WTC11 (cell line): ENCODE measurements at regions of chr14 and their contacts with region 1.

Region 1: DNA sequence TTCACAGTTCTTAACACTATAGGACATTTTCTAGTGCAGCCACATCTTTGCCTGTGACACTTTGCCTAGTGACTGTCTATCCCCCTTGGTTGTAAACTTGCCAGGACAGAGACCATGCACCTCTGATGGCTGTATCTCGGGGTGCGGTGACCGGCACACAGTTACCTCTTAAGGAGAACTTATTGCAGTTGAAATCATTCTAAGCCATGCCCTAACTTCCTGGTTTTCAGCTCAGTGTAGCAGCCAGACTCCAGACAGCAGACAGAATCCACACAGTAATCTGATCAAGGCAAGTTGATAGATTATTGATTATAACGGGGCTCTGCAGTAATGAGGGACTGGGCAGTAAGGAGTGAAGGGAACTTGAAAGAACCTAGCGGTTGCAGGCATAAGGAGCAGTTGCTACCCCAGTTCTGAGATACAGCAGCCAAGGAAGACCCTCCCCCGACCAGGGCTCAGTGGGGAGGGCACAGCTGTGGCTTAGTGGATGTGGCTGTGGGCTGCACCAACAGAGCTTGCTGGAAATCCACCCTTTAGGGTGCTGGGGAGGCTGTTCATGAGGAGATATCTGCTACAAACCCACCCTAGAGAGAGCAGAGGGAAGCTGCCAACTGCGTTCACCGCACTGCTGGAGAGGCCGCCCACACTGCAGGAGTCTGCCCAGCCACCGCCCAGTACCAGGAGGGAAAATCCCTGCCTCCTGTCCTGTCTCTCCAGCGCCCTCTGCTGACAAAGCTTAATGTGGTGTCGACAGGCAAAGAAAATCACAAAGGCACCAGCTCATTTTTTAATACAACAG is 58.2 kb upstream of the BEGAIN start:
- DNase-seq: peak; percentile 96
- ATAC-seq: peak; percentile 94
- H3K4me3 Mint-ChIP-seq: peak overlapping the region; percentile 50
- H3K27ac Mint-ChIP-seq: no peak overlapping the region
- H3K4me1 Mint-ChIP-seq: peaks cover 9% of the 10 kb centered on the region
- H3K27me3 Mint-ChIP-seq: peaks cover 6% of the 10 kb centered on the region
- CTCF ChIP-seq: peak; percentile 75

Region 2: GRCh38 chr14:100428727-100429126 is 216.7 kb before region 1 on chr14:
- CTCF ChIA-PET with region 1: interaction called, 11 read pairs
- POLR2A ChIA-PET with region 1: no interaction called
- DNase-seq: no peak
- ATAC-seq: no peak
- H3K4me3 Mint-ChIP-seq: no peak overlapping the region
- H3K27ac Mint-ChIP-seq: no peak overlapping the region
- H3K4me1 Mint-ChIP-seq: peaks cover 17% of the 10 kb centered on the region
- H3K27me3 Mint-ChIP-seq: no peaks in the 10 kb centered on the region
- CTCF ChIP-seq: no peak

Region 3: GRCh38 chr14:100524933-100525243 is 120.5 kb before region 1 on chr14:
- CTCF ChIA-PET with region 1: interaction called, 153 read pairs
- POLR2A ChIA-PET with region 1: no interaction called
- DNase-seq: peak; percentile 76
- ATAC-seq: peak; percentile 82
- H3K4me3 Mint-ChIP-seq: no peak overlapping the region
- H3K27ac Mint-ChIP-seq: no peak overlapping the region
- H3K4me1 Mint-ChIP-seq: peaks cover 2% of the 10 kb centered on the region; the same call in 1 of the 2 replicates
- H3K27me3 Mint-ChIP-seq: no peaks in the 10 kb centered on the region
- CTCF ChIP-seq: peak; percentile 60; the same call in 1 of the 2 replicates

Region 4: DNA sequence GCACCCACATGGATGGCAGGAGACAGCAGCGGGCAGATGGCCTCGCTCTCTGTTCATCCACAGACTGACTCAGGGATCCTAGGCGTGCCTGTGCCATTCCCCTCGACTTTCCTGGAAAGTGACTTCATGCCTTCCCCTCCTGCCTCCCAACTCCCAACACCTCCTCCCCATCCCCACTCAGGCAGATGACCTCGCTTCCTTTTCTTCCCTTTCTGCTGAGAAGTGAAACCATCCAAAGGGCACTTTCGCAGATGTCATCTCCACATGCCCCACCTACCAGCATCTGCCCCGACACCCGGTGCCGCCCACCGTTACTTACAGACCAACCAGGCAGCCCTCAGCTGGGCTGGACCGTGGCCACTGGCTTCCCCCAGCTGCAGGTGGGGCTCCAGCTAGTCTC is 87.7 kb before region 1 on chr14:
- CTCF ChIA-PET with region 1: interaction called, 25 read pairs
- POLR2A ChIA-PET with region 1: no interaction called
- DNase-seq: no peak
- ATAC-seq: no peak
- H3K4me3 Mint-ChIP-seq: no peak overlapping the region
- H3K27ac Mint-ChIP-seq: no peak overlapping the region
- H3K4me1 Mint-ChIP-seq: peaks cover 14% of the 10 kb centered on the region
- H3K27me3 Mint-ChIP-seq: peaks cover 5% of the 10 kb centered on the region
- CTCF ChIP-seq: no peak

Region 5: GRCh38 chr14:100617410-100618317 is 27.7 kb before region 1 on chr14:
- CTCF ChIA-PET with region 1: interaction called, 13 read pairs
- POLR2A ChIA-PET with region 1: no interaction called
- DNase-seq: no peak
- ATAC-seq: no peak
- H3K4me3 Mint-ChIP-seq: no peak overlapping the region
- H3K27ac Mint-ChIP-seq: no peak overlapping the region
- H3K4me1 Mint-ChIP-seq: peaks cover 14% of the 10 kb centered on the region
- H3K27me3 Mint-ChIP-seq: peaks cover 6% of the 10 kb centered on the region; the same call in 1 of the 2 replicates
- CTCF ChIP-seq: no peak